CD8-positive, alpha-beta memory T cell (primary cell): ENCODE measurements at regions of chr15 and their contacts with region 1.

Region 1: DNA sequence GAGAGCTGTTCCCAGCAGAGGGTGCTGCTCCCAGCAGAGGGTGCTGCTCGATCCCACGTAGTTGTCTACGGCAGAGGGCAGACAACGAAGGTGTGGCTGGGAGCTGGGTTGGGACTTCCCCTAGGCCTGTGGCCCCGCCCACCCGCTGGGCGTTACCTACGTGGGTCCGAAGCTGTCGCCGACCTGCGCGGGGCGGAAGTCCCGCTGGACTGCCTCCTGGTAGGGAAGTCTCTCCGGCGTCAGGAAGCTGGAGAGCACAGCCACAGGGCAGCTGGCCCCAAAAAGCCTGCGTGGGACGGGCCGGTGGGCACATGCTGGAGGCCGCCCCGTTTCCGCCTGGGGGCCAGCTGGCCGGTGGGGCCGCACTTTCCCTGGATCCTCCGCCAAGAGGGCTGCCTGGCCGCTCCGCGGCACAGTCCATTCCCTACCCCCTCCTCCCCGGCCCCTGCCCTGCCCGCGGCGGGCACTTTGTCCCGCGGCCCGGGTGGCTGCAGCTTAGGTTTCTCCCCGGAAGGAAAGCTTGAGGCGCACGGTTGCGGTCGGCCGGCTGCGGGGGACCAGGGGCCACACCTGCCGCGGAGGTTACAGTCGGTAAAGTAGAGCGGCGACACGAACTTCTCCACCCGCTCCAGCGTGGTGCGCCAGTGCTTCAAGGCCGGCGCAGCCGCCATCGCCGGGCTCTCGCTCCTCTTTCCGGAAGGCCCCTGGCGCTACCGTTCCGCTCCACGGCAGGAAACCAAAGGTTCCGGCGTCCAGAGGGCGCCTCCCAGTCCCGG is at the start of gene MAN2C1:
- DNase-seq: peak; percentile 85 to 94 (median 87)
- H3K4me3 ChIP-seq: peak within 1 kb of the TSS; percentile 88
- H3K4me3 Mint-ChIP-seq: peak within 1 kb of the TSS; percentile 88 to 97 (median 92)
- H3K27ac ChIP-seq: peak within 1 kb of the TSS; percentile 97
- H3K27ac Mint-ChIP-seq: peak within 1 kb of the TSS; percentile 94 to 99 (median 96)
- H3K4me1 ChIP-seq: peaks cover 16% of the 10 kb centered on the region
- H3K4me1 Mint-ChIP-seq: peaks cover 24 to 28% (median 25%) of the 10 kb centered on the region in 3 donors
- H3K27me3 ChIP-seq: no peaks in the 10 kb centered on the region
- H3K27me3 Mint-ChIP-seq: no peaks in the 10 kb centered on the region
- total RNA-seq, gene MAN2C1: 127 to 133 TPM

Region 2: GRCh38 chr15:75347222-75347878 is 20.8 kb before region 1 on chr15:
- CTCF ChIA-PET with region 1: interaction called, 35 read pairs
- POLR2A ChIA-PET with region 1: interaction called, 34 read pairs
- DNase-seq: peak; percentile 26 to 68 (median 65)
- H3K4me3 ChIP-seq: peak overlapping the region; percentile 68
- H3K4me3 Mint-ChIP-seq: peak overlapping the region; percentile 79 to 91 (median 84)
- H3K27ac ChIP-seq: peak overlapping the region; percentile 57
- H3K27ac Mint-ChIP-seq: peak overlapping the region; percentile 60 to 93 (median 86)
- H3K4me1 ChIP-seq: peaks cover 40% of the 10 kb centered on the region
- H3K4me1 Mint-ChIP-seq: peaks cover 26 to 42% (median 26%) of the 10 kb centered on the region in 3 donors
- H3K27me3 ChIP-seq: no peaks in the 10 kb centered on the region
- H3K27me3 Mint-ChIP-seq: peaks cover 0 to 10% of the 10 kb centered on the region in 2 donors

Region 3: DNA sequence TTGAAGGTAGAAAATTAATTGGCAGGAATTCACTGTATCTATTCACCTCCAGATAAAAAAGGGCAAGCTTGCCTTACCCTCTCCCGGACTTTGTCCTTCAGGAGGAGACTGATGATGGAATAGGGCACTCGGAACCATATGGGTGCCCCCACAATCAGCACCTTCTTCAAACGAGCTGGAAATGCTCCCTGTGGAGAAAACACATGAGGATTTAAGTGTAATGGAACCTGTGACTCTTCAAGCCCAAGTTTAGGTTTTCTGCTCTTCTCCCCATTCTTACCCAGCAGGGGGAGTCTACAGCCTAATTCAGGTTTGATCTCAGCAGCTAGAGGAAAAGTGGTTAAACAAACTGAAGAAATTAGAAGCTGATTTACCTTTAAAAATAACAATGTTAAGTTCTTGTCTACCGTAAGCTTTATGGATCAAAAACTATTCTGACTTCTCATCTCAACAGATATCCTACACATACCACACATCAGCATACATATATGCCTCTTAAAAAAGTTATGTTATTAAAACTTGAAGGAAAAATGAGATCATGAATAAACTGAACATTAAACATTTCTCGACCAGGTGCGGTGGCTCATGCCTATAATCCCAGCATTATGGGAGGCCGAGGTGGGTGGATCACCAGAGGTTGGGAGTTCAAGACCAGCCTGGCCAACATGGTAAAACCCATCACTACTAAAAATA is 140.9 kb after region 1 on chr15:
- CTCF ChIA-PET with region 1: no interaction called
- POLR2A ChIA-PET with region 1: no interaction called
- DNase-seq: peak in 2 of 5 donors; percentile 22 to 45
- H3K4me3 ChIP-seq: no peak overlapping the region
- H3K4me3 Mint-ChIP-seq: no peak overlapping the region
- H3K27ac ChIP-seq: no peak overlapping the region
- H3K27ac Mint-ChIP-seq: peak overlapping the region in 2 of 8 donors; percentile 17 to 30
- H3K4me1 ChIP-seq: no peaks in the 10 kb centered on the region
- H3K4me1 Mint-ChIP-seq: peaks cover 0 to 4% (median 0%) of the 10 kb centered on the region in 3 donors
- H3K27me3 ChIP-seq: no peaks in the 10 kb centered on the region
- H3K27me3 Mint-ChIP-seq: peaks cover 0 to 1% of the 10 kb centered on the region in 2 donors

Region 4: DNA sequence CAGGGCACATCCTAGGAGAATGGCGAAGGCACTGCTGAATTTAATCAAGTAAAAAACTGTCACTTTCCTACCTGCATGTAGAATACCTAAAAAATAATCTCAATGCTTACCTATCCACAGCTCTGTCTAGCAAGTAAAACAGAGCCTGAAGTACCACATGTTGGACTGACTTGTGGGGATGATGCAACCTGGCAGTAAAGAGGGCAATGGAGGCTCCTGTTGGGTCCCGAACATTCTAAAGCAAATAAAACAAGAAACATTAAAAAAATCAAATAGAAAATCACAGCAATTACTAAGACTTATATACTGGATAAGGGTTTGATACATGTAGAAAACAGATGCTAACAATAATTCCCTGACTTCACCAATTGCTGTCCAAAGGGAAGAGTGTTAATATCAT is 154.9 kb after region 1 on chr15:
- CTCF ChIA-PET with region 1: no interaction called
- POLR2A ChIA-PET with region 1: no interaction called
- DNase-seq: no peak
- H3K4me3 ChIP-seq: no peak overlapping the region
- H3K4me3 Mint-ChIP-seq: no peak overlapping the region
- H3K27ac ChIP-seq: no peak overlapping the region
- H3K27ac Mint-ChIP-seq: peak overlapping the region in 4 of 8 donors; percentile 3 to 53 (median 28)
- H3K4me1 ChIP-seq: no peaks in the 10 kb centered on the region
- H3K4me1 Mint-ChIP-seq: peaks cover 0 to 11% (median 0%) of the 10 kb centered on the region in 3 donors
- H3K27me3 ChIP-seq: no peaks in the 10 kb centered on the region
- H3K27me3 Mint-ChIP-seq: no peaks in the 10 kb centered on the region

Region 5: GRCh38 chr15:75625542-75626347 is 257.6 kb after region 1 on chr15 and contains the start of gene SNUPN:
- CTCF ChIA-PET with region 1: interaction called, 9 read pairs
- POLR2A ChIA-PET with region 1: interaction called, 13 read pairs
- DNase-seq: peak; percentile 85 to 95 (median 87)
- H3K4me3 ChIP-seq: peak within 1 kb of the TSS; percentile 78
- H3K4me3 Mint-ChIP-seq: peak within 1 kb of the TSS; percentile 89 to 97 (median 90)
- H3K27ac ChIP-seq: peak within 1 kb of the TSS; percentile 85
- H3K27ac Mint-ChIP-seq: peak within 1 kb of the TSS; percentile 96 to 100 (median 98)
- H3K4me1 ChIP-seq: peaks cover 24% of the 10 kb centered on the region
- H3K4me1 Mint-ChIP-seq: peaks cover 19 to 33% (median 28%) of the 10 kb centered on the region in 3 donors
- H3K27me3 ChIP-seq: no peaks in the 10 kb centered on the region
- H3K27me3 Mint-ChIP-seq: no peaks in the 10 kb centered on the region
- total RNA-seq, gene SNUPN: 24.6 to 26.9 TPM

Region 6: DNA sequence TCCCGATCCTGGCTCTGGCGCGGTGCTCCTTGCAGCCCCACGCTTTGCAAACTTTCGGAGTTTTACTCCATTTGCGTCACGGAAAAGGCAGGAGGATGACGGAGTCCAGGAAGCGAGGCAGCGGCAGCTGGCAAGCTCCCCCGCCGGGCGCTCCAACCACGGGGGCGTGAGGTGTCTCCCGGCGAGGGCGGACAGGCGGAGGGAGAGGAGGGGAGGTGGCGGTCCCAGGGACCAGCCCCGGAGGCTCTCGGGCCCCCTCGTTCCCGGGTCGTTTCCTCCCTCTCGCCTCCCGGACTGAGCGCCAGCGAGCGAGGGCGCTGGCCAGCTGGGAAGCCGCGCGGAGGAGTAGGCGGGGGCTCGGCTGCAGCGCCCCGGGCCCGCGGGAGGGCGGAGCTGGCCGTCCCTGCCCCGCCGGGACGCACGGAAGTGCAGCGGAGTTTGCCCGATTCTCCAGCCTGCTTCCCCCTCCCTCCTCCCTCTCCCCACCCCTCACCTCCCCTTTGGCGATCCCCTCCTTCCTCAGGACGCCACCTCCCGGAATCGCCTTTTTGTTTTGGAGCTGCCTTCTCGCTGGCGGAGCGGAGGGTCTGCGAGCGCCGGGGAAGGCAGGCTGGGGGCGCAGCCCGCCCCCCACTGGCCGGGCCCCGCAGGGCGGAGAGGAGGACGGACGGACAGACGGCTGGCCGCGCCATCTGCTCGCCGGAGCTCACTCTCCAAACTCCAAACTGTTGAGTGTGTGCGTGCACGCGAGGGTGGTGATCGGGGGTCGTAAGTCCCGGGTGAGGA is 279.5 kb after region 1 on chr15 and contains the start of gene SNX33:
- CTCF ChIA-PET with region 1: interaction called, 39 read pairs
- POLR2A ChIA-PET with region 1: interaction called, 59 read pairs
- DNase-seq: peak; percentile 43 to 72 (median 45)
- H3K4me3 ChIP-seq: peak within 1 kb of the TSS; percentile 93
- H3K4me3 Mint-ChIP-seq: peak within 1 kb of the TSS; percentile 83 to 93 (median 88)
- H3K27ac ChIP-seq: peak within 1 kb of the TSS; percentile 70
- H3K27ac Mint-ChIP-seq: peak within 1 kb of the TSS in 7 of 8 donors; percentile 66 to 92 (median 84)
- H3K4me1 ChIP-seq: peaks cover 21% of the 10 kb centered on the region
- H3K4me1 Mint-ChIP-seq: peaks cover 34 to 57% (median 40%) of the 10 kb centered on the region in 3 donors
- H3K27me3 ChIP-seq: no peaks in the 10 kb centered on the region
- H3K27me3 Mint-ChIP-seq: no peaks in the 10 kb centered on the region
- total RNA-seq, gene SNX33: 3.1 to 3.5 TPM